Activated naive CD4-positive, alpha-beta T cell treated with anti-CD3 and anti-CD28 coated beads for 36 hours (primary cell): ENCODE measurements at regions of chr5 and their contacts with region 1.

Region 1: DNA sequence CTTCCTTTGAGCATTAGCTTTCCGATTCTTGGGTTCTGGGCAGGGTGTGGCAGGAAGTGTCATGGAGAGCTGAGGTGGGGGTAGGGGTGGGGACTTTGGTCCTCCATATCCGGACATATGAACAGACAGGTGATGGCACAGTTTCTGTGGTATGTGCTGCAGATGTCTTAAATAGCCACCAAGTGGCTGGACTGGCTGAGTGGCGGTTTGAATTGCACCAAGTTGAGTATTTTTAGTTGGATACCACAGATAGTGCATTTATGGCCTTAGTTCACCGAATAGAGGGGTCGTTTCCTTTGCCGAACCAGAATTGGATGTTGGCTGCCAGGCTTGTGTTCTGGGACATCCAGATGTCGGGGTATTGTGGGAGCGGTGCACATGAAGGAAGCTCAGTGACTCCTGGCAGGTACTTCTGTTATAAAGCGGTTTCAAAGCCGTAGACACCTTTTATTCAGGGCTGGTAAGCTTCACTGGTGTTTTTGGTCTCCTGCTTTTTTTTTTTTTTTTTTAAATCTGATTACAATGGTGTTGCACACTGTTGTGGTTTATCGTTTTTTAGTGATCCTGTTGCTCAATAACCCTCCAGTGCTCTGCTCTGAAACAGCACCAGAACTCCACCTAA is 15.1 kb upstream of the TNFAIP8 start:
- DNase-seq: peak; percentile 68
- H3K4me3 Mint-ChIP-seq: peak overlapping the region; percentile 69
- H3K27ac Mint-ChIP-seq: peak overlapping the region; percentile 96
- H3K4me1 Mint-ChIP-seq: peaks cover 93% of the 10 kb centered on the region
- H3K27me3 Mint-ChIP-seq: no peaks in the 10 kb centered on the region

Region 2: GRCh38 chr5:119079318-119079921 is 261.3 kb before region 1 on chr5:
- CTCF ChIA-PET with region 1: no interaction called
- intact Hi-C with region 1: loop called (anchors 1 kb)
- DNase-seq: peak; percentile 59
- H3K4me3 Mint-ChIP-seq: no peak overlapping the region
- H3K27ac Mint-ChIP-seq: peak overlapping the region; percentile 54
- H3K4me1 Mint-ChIP-seq: peaks cover 52% of the 10 kb centered on the region
- H3K27me3 Mint-ChIP-seq: no peaks in the 10 kb centered on the region

Region 3: DNA sequence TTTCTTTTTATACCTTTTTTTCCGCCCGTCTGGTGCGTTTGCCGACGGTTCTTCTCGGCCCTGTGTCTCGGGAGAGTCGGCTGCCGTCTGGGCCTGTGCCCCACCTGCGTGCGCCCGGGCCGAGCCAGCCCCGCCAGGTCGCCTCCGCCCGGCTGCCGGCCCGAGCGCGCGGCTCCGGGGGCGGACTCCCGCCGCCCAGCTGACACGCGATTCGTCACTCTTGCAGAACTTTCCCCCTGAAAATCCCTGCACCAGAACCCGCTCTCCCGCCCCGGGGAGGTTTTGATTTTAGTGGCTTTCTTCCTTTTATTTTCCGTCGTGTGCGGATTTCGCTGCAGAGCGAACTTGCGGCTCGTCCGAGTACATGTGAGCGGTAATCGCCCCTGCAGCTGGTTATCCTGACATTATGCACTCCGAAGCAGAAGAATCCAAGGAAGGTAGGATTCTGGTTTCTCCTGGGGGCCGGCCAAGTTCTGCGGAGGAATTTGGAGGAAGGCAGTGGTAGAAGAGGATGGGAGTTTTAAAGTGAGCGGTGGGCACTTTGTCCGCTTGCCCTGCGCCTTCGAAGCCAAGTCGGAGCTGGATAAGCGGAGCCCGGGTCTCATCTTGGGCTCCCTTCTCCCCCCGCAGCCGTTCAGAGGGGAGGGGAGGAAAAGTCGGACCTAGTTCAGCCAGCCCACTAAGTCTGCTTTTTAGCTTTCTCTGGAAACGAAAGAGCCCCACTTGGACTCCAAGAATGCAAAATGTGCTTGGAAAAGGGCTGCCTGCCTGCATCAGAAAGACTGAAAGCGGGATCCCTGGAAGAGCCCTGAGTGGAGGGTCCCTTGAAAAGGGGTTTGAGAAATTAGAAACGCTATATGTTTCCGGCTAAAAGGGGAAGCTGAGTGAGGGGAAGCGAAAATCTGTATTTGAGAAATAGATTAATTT is 15.2 kb after region 1 on chr5 and contains the start of gene TNFAIP8:
- CTCF ChIA-PET with region 1: interaction called, 17 read pairs
- intact Hi-C with region 1: loop called (anchors 1 kb)
- DNase-seq: peak; percentile 91
- H3K4me3 Mint-ChIP-seq: peak within 1 kb of the TSS; percentile 98
- H3K27ac Mint-ChIP-seq: peak within 1 kb of the TSS; percentile 98
- H3K4me1 Mint-ChIP-seq: peaks cover 67% of the 10 kb centered on the region
- H3K27me3 Mint-ChIP-seq: no peaks in the 10 kb centered on the region
- total RNA-seq, gene TNFAIP8: 141 to 142 TPM